PC-3 (cell line): ENCODE measurements at regions of chr7 and their contacts with region 1.

Region 1: GRCh38 chr7:17320102-17320497 is 21.6 kb downstream of the AHR start:
- DNase-seq: no peak
- ATAC-seq: peak; percentile 53
- H3K4me3 ChIP-seq: no peak overlapping the region
- H3K27ac ChIP-seq: no peak overlapping the region
- H3K4me1 ChIP-seq: peaks cover 23% of the 10 kb centered on the region
- H3K27me3 ChIP-seq: no peaks in the 10 kb centered on the region
- CTCF ChIP-seq: no peak

Region 2: GRCh38 chr7:17333212-17333611 is 13.1 kb after region 1 on chr7:
- CTCF ChIA-PET with region 1: no interaction called
- POLR2A ChIA-PET with region 1: no interaction called
- intact Hi-C with region 1: no loop called
- DNase-seq: no peak
- ATAC-seq: peak; percentile 70
- H3K4me3 ChIP-seq: no peak overlapping the region
- H3K27ac ChIP-seq: no peak overlapping the region
- H3K4me1 ChIP-seq: peaks cover 9% of the 10 kb centered on the region
- H3K27me3 ChIP-seq: no peaks in the 10 kb centered on the region
- CTCF ChIP-seq: no peak

Region 3: GRCh38 chr7:17646253-17646956 is 326.3 kb after region 1 on chr7:
- CTCF ChIA-PET with region 1: no interaction called
- POLR2A ChIA-PET with region 1: no interaction called
- intact Hi-C with region 1: loop called (anchors 5 kb)
- DNase-seq: peak; percentile 54
- ATAC-seq: peak; percentile 87
- H3K4me3 ChIP-seq: no peak overlapping the region
- H3K27ac ChIP-seq: no peak overlapping the region
- H3K4me1 ChIP-seq: peaks cover 8% of the 10 kb centered on the region
- H3K27me3 ChIP-seq: no peaks in the 10 kb centered on the region
- CTCF ChIP-seq: peak; percentile 77